K562 (cell line): ENCODE measurements at regions of chr6 and their contacts with region 1.

Region 1: DNA sequence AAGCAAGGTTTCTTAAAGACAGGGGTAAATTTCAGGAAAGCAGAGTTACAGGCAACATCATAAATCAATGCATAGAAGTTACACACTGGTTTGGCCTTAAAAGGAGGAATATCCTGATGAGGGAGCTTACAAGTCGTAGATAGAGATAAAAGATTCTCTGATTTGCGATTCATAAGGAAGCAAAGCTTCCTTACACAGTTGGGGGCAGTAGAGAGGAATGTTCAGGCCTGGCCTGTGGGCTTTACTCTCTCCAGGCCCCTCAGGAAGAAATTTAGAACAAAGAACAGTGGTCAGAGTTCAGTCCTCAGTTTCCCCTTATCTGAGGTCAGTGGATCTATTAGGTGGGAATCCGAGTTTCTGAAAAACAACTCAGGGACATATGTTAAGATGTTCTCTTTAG is 19.3 kb downstream of the HLA-C start:
- DNase-seq: no peak
- ATAC-seq: no peak
- H3K4me3 ChIP-seq: no peak overlapping the region
- H3K27ac ChIP-seq: no peak overlapping the region
- H3K4me1 ChIP-seq: no peaks in the 10 kb centered on the region
- H3K27me3 ChIP-seq: no peaks in the 10 kb centered on the region; a peak in 1 of 5 replicates
- CTCF ChIP-seq: no peak
- EP300 ChIP-seq: no peak
- POLR2A ChIP-seq: no peak
- RAD21 ChIP-seq: no peak

Region 2: DNA sequence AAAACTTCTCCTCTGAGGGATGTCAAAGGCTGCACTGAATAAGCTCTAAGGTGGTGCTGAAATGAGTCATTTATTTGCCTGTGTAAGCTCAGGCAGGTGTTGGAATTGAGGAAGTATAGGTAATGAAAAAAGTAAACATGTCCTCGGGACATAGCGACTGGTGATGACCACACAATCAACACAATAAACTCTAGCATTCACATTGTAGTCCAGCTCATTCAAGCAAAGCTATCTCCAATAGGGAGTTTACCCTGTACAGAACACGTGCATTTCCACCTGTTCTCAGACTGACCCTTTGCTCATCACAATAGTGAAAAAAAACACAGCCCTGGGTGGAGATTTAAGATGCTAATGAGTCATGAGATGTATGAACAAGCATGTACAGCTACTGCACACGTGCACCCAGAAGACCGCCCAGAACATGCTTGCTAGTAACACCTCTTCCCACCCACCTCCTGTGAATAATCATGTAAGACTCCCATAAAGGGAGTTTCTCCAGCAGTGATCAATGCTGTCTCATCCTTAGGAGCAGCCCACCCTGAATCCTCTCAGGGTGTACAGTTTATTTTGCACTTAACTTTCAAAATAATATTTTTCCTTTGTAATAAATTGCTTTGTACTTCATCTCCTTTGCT is 49.2 kb before region 1 on chr6:
- CTCF ChIA-PET with region 1: no interaction called
- POLR2A ChIA-PET with region 1: no interaction called
- in situ Hi-C with region 1: no loop called
- intact Hi-C with region 1: loop called (anchors 10 kb)
- DNase-seq: peak in 2 of 4 experiments; percentile 19 to 54
- ATAC-seq: peak; percentile 53
- H3K4me3 ChIP-seq: no peak overlapping the region
- H3K27ac ChIP-seq: peak overlapping the region; percentile 57
- H3K4me1 ChIP-seq: peaks cover 12 to 18% of the 10 kb centered on the region in 2 experiments; a peak in 4 of 5 replicates
- H3K27me3 ChIP-seq: no peaks in the 10 kb centered on the region
- CTCF ChIP-seq: no peak
- EP300 ChIP-seq: no peak
- POLR2A ChIP-seq: peak; percentile 47; the same call in 1 of the 2 replicates
- RAD21 ChIP-seq: no peak